Natural killer cell (primary cell): ENCODE measurements at regions of chr3 and their contacts with region 1.

Region 1: DNA sequence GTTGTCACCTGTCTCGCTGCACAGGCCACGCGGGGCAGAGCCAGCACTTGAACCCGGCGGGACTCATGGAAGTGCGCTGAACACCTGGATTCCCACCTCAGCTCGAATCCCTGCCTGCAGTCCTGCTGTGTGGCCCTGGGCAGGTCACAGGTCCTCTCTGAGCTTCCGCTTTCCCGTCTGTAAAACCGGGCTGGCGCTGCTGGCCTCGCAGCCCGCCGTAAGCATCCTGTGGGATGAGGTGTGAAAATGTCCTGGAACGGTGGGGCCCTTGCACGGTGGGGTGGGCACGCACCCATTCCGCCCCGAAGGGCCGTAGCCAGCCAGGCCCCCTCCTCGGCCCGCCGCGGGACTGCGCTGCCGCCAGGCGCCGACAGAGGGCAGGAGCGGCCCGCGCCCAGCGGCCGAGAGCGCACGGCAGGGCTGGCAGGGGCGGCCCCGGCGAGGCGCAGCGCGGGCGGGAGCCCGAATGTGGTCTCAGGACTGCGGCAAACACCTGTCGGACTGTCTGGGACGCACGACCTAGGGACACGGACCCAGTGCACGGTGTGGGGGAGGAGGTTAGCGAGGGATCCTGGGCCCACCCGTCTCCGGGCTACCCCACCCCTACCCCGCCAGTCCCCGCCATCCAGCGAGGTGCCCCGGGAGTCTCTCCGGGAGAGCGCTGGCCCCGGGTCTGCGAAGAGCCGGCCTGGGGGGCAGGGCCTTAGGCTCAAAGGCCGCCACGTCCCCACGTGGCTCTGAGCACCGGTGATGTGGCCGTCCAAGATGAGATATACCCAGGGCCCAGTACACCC is 40.4 kb downstream of the DNAJB8 start:
- DNase-seq: peak; percentile 60 to 77
- ATAC-seq: peak; percentile 87 to 99 (median 98)
- H3K4me3 ChIP-seq: no peak overlapping the region
- H3K4me3 Mint-ChIP-seq: no peak overlapping the region
- H3K27ac ChIP-seq: no peak overlapping the region
- H3K27ac Mint-ChIP-seq: no peak overlapping the region
- H3K4me1 ChIP-seq: peaks cover 9% of the 10 kb centered on the region
- H3K4me1 Mint-ChIP-seq: no peaks in the 10 kb centered on the region
- H3K27me3 ChIP-seq: no peaks in the 10 kb centered on the region
- H3K27me3 Mint-ChIP-seq: peaks cover 11 to 23% of the 10 kb centered on the region in 2 donors
- CTCF ChIP-seq: peak; percentile 92

Region 2: DNA sequence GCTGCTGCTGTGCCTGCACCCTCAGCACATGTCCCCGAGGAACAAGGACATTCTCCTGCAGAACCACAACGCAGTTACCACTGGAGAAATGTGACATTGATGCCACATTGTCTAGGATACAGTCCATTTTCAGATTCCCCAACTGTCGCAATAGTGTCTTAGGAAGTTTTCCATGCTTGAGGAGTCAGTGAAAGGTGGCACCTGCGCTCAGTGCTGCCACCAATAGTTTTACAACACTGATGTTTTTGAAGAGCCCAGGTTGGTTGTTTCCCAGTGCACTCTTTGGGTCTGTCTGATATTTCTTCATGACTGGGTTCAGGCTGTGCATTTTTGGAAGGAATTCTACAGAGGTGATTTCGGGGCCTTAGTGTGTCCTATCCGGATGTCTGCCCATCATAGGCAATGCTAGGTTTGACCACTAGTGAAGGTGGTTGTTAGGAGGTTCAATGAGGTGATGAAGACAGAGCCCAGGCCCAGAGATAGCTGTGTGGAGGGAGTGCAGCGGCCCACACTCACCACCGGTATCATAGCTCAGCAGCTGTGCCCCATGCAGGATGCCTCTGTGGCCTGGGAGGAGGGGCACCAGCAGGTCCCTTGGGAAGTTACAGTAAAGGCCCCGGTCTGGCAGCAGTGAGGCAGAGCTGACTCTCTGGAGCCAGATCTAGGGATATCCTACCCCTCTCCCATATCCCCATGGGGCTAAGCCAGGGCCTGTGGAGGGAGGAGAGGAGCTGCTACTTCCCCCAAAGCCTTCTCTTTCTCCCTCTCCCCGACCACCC is 56.3 kb before region 1 on chr3:
- intact Hi-C with region 1: no loop called
- DNase-seq: no peak
- ATAC-seq: no peak
- H3K4me3 ChIP-seq: no peak overlapping the region
- H3K4me3 Mint-ChIP-seq: no peak overlapping the region
- H3K27ac ChIP-seq: no peak overlapping the region
- H3K27ac Mint-ChIP-seq: no peak overlapping the region
- H3K4me1 ChIP-seq: no peaks in the 10 kb centered on the region
- H3K4me1 Mint-ChIP-seq: peaks cover 12% of the 10 kb centered on the region in 2 donors
- H3K27me3 ChIP-seq: no peaks in the 10 kb centered on the region
- H3K27me3 Mint-ChIP-seq: no peaks in the 10 kb centered on the region
- CTCF ChIP-seq: no peak

Region 3: DNA sequence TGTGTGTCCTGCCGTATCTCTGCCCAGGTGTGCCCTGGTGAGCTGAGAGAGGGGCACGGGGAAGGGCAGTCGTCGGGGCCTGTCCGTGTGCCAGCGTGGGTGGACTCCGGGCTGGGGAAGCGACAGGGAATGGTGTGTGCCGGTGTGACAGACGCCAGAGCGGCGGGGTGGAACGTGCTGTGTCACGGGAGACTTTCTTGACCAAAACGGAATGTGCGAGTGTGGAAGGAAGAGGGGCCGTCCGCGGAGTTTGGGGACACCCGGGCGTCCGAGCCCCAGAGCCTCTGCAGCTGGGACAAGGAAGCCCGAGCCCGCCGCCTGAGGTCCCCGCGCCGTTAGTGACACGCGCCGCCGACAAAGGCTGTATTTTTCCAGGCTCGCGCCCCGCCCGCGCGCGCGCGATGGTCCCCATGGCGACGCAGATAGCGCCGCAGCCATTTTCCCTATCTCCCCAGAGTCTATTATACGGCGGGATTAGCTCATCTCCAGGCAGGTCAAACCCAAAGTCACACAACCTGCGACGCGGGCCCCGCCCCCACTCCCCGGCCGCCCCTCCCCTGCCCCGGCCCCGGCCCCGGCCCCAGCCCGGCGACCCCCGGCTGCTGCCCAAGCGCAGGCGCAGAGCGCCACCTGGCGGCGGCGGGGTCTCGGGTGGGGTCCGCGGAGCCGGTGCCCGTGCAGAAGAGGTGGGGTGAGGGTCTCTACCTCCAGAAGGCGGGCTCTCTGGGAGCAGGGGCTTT is 71.2 kb after region 1 on chr3:
- intact Hi-C with region 1: loop called (anchors 2 kb)
- DNase-seq: peak; percentile 54 to 77
- ATAC-seq: peak; percentile 39 to 70 (median 60)
- H3K4me3 ChIP-seq: peak overlapping the region; percentile 11
- H3K4me3 Mint-ChIP-seq: peak overlapping the region; percentile 78
- H3K27ac ChIP-seq: no peak overlapping the region
- H3K27ac Mint-ChIP-seq: no peak overlapping the region
- H3K4me1 ChIP-seq: peaks cover 14% of the 10 kb centered on the region
- H3K4me1 Mint-ChIP-seq: peaks cover 0 to 21% of the 10 kb centered on the region in 2 donors
- H3K27me3 ChIP-seq: peaks cover 23% of the 10 kb centered on the region
- H3K27me3 Mint-ChIP-seq: peaks cover 66 to 77% of the 10 kb centered on the region in 2 donors
- CTCF ChIP-seq: peak; percentile 69

Region 4: DNA sequence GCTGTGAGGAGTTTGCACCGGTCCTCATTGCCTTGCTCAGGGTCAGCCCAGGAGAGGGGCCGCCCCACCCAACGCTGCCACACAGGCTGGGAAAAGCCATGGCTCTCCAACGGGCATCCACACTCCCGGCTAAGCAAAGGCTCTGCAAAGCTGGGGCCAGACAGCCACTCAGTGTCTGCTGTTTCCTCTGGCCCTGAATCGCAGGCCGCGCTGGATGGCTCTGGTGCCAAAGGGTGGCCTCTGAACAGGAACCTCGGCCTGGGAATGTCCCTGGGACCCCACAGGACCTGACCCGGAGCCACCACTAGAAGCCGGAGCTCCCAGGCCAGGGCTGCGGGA is 181.4 kb after region 1 on chr3:
- intact Hi-C with region 1: loop called (anchors 1 kb)
- DNase-seq: no peak
- ATAC-seq: no peak
- H3K4me3 ChIP-seq: peak overlapping the region; percentile 37
- H3K4me3 Mint-ChIP-seq: peak overlapping the region; percentile 17
- H3K27ac ChIP-seq: no peak overlapping the region
- H3K27ac Mint-ChIP-seq: no peak overlapping the region
- H3K4me1 ChIP-seq: peaks cover 12% of the 10 kb centered on the region
- H3K4me1 Mint-ChIP-seq: no peaks in the 10 kb centered on the region
- H3K27me3 ChIP-seq: no peaks in the 10 kb centered on the region
- H3K27me3 Mint-ChIP-seq: no peaks in the 10 kb centered on the region
- CTCF ChIP-seq: no peak